Dendritic cell treated with granulocyte-macrophage colony-stimulating factor and Interleukin-4, amounts not matched to agents 40 ng/mL and 50 ng/mL, for 4 days (primary cell): ENCODE measurements at regions of chr12 and their contacts with region 1.

Region 1: DNA sequence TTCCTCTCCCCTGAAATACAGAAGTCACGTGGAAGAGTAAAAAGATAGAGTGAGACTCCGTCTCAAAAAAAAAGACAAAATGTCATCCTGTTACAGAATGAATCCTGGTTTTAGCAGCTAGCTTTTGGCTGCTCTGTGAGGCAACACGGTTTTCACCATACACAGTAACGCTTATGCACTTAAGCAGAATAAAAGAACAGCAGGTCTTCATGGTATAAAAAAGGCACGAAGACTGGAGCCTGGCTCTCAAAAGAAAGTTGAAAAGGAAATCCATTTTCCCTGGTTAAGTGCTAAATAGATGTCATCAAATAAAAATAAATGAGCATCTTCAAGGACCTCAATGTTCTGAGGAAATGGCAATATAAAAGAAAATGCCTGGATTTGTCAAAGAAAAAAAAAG is 444.1 kb downstream of the IPO8 start:
- H3K4me3 Mint-ChIP-seq: no peak overlapping the region
- H3K27ac Mint-ChIP-seq: no peak overlapping the region
- H3K4me1 Mint-ChIP-seq: no peaks in the 10 kb centered on the region
- H3K27me3 Mint-ChIP-seq: no peaks in the 10 kb centered on the region

Region 2: DNA sequence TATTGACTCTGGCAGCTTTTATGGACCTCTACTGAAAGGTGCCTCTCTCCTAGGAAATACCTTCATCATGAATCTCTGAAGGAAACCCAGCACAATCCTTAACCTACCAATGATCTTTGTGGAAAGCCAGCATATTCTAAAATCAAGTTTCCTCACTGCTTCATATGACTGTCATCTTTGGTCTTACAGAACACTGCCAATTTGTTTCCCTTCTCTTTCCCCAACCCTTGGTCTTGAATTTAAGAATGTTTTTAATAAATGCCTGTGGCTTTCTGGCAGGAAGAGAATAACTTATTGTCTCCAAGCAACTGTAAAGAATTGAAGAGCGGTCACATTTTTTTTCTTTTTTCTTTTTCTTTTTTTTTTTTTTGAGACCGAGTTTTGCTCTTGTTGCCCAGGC is 16.5 kb after region 1 on chr12:
- intact Hi-C with region 1: no loop called
- H3K4me3 Mint-ChIP-seq: no peak overlapping the region
- H3K27ac Mint-ChIP-seq: no peak overlapping the region
- H3K4me1 Mint-ChIP-seq: no peaks in the 10 kb centered on the region
- H3K27me3 Mint-ChIP-seq: no peaks in the 10 kb centered on the region

Region 3: DNA sequence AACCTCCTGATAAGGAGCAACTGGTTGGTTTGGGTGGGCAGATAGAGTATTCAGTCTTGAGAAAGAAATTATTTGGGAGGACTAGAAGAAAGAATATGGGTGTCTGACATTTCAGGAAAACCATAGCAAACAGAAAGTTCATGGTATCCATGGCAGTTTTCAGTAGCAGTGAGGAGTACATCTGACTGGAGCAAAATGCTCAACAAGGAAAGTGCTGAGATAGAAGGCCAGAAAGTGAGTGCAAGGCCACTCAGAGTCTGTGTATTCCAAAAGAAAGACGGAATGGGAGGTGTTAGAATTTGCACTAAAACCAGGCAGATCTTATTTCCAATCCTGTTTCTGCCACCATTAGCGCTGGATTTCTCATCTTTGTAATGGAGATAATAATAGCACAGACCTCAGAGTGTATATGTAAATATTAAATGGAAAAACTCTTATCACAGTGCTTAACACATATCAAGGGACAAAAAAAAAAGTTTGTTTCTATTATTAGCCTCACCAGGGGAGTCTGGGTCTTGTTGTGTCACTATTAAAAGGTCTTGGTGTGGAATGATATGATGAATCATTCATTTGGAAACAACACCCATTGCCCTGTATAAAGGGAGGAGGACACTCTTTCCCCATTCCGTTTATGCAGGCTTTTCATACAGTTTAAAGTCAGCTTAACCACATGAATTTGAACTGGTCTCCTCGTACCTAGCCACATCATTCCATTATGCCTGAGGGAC is 94.4 kb after region 1 on chr12:
- intact Hi-C with region 1: loop called (anchors 1 kb)
- H3K4me3 Mint-ChIP-seq: no peak overlapping the region
- H3K27ac Mint-ChIP-seq: no peak overlapping the region
- H3K4me1 Mint-ChIP-seq: no peaks in the 10 kb centered on the region
- H3K27me3 Mint-ChIP-seq: no peaks in the 10 kb centered on the region